ENCODE measurements at regions of chr13 and their contacts with region 1.

Region 1: GRCh38 chr13:76903544-76904162 is 17.4 kb upstream of the KCTD12 start:
- DNase-seq: peak; percentile 60
- CTCF ChIP-seq: peak; percentile 95

Region 2: GRCh38 chr13:75876360-75877050 is 1027.1 kb before region 1 on chr13:
- in situ Hi-C with region 1: loop called (anchors 25 kb)
- DNase-seq: peak; percentile 54
- CTCF ChIP-seq: peak; percentile 87

Region 3: DNA sequence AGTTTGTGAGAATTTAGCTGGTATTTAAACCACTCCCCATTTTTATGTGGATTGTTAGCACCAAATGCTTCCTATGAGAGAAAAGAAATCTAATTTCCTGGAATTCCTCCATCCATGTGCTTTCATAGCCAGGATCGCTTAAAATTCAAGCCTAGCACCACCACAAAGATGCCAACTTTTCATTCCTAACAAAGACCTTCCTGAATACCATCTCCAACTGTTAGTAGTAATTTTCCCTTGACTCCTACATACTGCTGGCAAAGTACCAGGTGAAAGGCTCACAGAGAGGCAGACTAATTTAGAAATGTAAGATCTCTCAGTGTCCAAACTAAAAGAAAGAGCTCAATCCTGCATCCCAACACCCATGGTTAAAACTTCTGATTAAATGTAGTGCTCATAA is 403.8 kb before region 1 on chr13:
- in situ Hi-C with region 1: loop called (anchors 25 kb)
- DNase-seq: no peak
- CTCF ChIP-seq: no peak

Measured in GM13976 (cell line).